AG04449 (cell line): ENCODE measurements at regions of chr11 and their contacts with region 1.

Region 1: GRCh38 chr11:130400781-130401483 is 27.5 kb downstream of the ADAMTS8 start:
- DNase-seq: peak; percentile 41
- H3K4me3 ChIP-seq: no peak overlapping the region
- CTCF ChIP-seq: no peak

Region 2: GRCh38 chr11:130390071-130390758 is 10.7 kb before region 1 on chr11:
- CTCF ChIA-PET with region 1: interaction called, 21 read pairs
- POLR2A ChIA-PET with region 1: no interaction called
- DNase-seq: no peak
- H3K4me3 ChIP-seq: no peak overlapping the region
- CTCF ChIP-seq: peak; percentile 65

Region 3: GRCh38 chr11:130527636-130528297 is 126.8 kb after region 1 on chr11:
- CTCF ChIA-PET with region 1: no interaction called
- POLR2A ChIA-PET with region 1: no interaction called
- DNase-seq: no peak
- H3K4me3 ChIP-seq: no peak overlapping the region
- CTCF ChIP-seq: no peak